Esophagus muscularis mucosa (tissue), 4 donors: ENCODE measurements at regions of chr4 and their contacts with region 1.

Region 1: GRCh38 chr4:75724066-75724866 is at the start of gene USO1:
- DNase-seq: peak; percentile 100
- H3K4me3 ChIP-seq: peak within 1 kb of the TSS; percentile 83 to 97 (median 90)
- H3K27ac ChIP-seq: peak within 1 kb of the TSS; percentile 93 to 99 (median 98)
- H3K4me1 ChIP-seq: peaks cover 42 to 61% (median 53%) of the 10 kb centered on the region in 4 donors
- H3K27me3 ChIP-seq: no peaks in the 10 kb centered on the region
- CTCF ChIP-seq: peak; percentile 68 to 72 (median 71)
- EP300 ChIP-seq: no peak
- POLR2A ChIP-seq: peak; percentile 83
- total RNA-seq, gene USO1: 61.0 to 103 (median 74.4) TPM

Region 2: DNA sequence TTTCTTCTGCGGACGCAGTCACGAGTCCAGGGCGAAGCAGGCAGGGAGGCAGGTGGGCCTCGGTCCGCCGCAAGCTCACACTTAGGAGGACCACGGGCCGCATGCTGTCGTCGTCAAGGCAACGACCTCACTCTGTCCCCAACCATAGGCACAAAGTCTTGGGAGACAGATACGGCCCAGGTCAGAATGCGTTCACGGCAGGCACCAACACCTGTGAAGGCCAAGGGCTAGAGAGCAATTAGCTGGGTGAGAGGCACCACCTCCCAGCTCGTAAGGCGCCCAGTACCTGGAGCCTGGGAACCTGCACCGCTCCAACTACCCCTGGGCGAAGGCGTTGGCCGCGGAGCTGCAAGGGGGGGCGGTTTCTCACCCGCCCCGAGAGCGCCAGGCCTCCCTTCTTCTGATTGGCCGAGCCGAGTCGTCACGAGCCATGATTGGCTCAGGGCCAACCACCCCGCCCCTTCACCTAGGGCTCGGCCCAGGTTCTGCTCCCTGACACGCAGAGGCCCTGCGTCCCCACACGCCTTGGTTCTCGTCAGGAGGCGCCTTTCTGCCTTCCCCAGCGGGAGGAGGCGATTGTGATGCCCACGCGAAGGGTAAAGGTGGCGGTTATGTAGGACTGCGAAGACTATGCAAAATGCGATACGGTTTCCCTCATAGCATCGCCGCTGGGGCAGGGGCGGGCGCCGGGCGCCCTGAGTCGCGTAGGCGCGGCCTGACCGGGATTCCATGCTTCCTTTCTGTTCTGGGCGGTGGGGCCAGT is 93.9 kb before region 1 on chr4 and contains the start of gene CDKL2:
- intact Hi-C with region 1: loop called (anchors 5 kb)
- DNase-seq: peak; percentile 96
- H3K4me3 ChIP-seq: peak within 1 kb of the TSS; percentile 66 to 82 (median 68)
- H3K27ac ChIP-seq: peak within 1 kb of the TSS; percentile 59 to 78 (median 74)
- H3K4me1 ChIP-seq: peaks cover 2 to 30% (median 18%) of the 10 kb centered on the region in 4 donors
- H3K27me3 ChIP-seq: no peaks in the 10 kb centered on the region
- CTCF ChIP-seq: no peak
- EP300 ChIP-seq: no peak
- POLR2A ChIP-seq: no peak
- total RNA-seq, gene CDKL2: 2.9 to 6.2 (median 3.1) TPM

Region 3: DNA sequence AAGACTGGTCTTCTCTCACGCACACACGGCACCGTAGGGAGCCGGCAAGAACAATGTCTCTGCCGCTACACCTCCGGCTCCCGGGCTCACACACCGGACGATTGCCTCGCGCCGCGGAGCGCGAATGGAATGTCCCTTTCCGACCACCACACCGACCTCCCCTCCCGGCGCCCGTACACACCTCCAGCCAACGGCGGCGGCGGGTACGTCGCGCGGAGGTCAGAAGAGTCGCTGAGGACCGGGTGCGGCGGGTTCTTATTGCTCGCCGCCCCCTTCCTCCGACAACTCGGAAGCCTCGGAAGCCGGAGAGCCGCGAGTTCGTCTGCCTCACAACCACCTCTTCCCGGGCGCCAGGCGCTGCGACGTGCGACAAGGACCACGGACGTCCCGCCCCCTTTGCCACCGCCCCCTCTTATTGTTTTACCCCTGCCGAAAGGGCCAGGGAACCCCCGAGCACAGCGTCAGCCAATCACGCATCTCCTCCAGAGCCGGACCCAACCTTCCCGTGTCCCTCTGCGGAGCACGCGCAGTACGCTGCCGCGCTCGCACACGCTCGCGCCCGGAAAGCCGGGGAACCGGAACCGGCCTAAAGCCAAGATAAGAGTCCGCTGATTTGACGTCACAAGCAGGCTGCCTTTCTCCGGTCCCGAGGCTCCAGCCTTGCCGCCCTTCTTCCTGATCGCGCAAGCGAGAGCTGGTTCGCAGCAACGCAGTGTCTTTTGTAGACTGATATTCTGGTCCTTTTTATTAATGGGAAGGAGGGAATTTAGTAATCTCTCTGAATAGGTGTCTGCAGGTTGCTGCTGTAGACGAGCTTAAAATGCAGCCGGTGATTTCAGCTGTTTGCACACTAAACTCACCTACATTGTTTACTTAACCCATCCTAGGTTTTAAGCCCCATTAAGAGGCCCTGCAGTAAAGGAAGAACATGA is 51.0 kb before region 1 on chr4 and contains the start of gene G3BP2:
- intact Hi-C with region 1: loop called (anchors 2 kb)
- DNase-seq: peak; percentile 99
- H3K4me3 ChIP-seq: peak within 1 kb of the TSS; percentile 96 to 100 (median 98)
- H3K27ac ChIP-seq: peak within 1 kb of the TSS; percentile 97 to 99 (median 98)
- H3K4me1 ChIP-seq: peaks cover 39 to 44% (median 43%) of the 10 kb centered on the region in 4 donors
- H3K27me3 ChIP-seq: no peaks in the 10 kb centered on the region
- CTCF ChIP-seq: peak in 1 of 3 experiments; percentile 22
- EP300 ChIP-seq: no peak
- POLR2A ChIP-seq: peak; percentile 84
- total RNA-seq, gene G3BP2: 94.6 to 127 (median 109) TPM

Region 4: GRCh38 chr4:76213415-76214176 is 489.3 kb after region 1 on chr4 and contains the start of gene SCARB2:
- intact Hi-C with region 1: no loop called
- DNase-seq: peak; percentile 93
- H3K4me3 ChIP-seq: peak within 1 kb of the TSS; percentile 78 to 96 (median 88)
- H3K27ac ChIP-seq: peak within 1 kb of the TSS; percentile 95 to 99 (median 98)
- H3K4me1 ChIP-seq: peaks cover 58 to 62% (median 61%) of the 10 kb centered on the region in 4 donors
- H3K27me3 ChIP-seq: no peaks in the 10 kb centered on the region
- CTCF ChIP-seq: no peak
- EP300 ChIP-seq: no peak
- POLR2A ChIP-seq: peak; percentile 83
- total RNA-seq, gene SCARB2: 89.3 to 118 (median 106) TPM